ENCODE measurements at regions of chr18 and their contacts with region 1.

Region 1: DNA sequence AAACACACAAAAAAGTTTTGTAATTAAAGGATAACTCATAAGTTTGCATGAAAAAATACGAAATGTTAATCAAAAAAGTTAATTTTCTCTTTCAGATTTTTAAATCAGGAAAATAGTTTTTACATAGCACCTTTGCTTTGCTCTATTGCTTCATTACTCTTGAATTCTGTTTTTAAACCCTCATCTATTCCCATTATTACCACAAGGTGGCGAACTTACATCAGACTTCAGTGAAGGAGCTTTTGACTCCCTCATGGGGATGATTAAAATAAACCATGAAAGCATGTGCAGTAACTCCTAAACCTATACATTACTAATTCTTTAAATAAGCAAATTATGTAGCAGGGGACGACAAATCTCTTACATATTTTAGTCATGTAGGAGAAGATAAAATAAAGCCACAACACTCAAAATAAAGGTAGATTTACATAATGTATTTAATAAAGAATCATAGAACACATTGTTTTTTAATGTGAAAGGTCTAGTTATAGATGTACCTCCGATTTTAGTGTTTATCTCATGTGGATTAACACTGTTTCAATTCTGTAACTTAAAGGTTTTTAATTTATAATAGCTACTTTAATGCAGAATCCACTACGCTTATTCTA is 105.2 kb downstream of the NETO1 start:
- DNase-seq: peak; percentile 6 to 49
- ATAC-seq: peak; percentile 50 to 63; a peak in 4 of 6 replicates
- H3K4me3 ChIP-seq: no peak overlapping the region
- H3K27ac ChIP-seq: no peak overlapping the region
- H3K4me1 ChIP-seq: no peaks in the 10 kb centered on the region
- CTCF ChIP-seq: peak; percentile 67
- EP300 ChIP-seq: no peak
- POLR2A ChIP-seq: no peak
- RAD21 ChIP-seq: peak; percentile 75 to 77

Region 2: DNA sequence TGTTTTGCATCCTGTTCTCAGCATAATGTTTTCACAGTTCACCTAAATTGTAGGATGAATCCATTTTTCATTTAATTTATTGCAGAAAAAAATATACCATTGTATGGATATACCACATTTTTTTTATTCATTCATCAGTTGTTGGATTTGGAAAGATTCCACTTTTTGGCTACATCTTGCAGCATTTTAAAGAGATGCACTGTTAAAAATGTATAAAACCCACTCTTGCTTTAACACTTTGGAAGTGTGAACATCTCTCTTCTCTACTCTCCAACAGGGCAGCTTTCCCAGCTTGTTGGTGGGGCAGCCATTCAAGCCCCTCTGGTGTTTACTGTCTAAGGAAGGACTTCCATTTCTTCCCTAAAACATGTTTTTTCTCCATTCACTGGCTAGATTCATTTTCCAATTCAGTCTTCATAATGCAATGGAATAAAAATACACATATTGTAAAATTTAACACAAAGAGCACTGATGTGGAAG is 114.1 kb before region 1 on chr18:
- CTCF ChIA-PET with region 1: no interaction called
- POLR2A ChIA-PET with region 1: no interaction called
- DNase-seq: no peak
- ATAC-seq: no peak
- H3K4me3 ChIP-seq: no peak overlapping the region
- H3K27ac ChIP-seq: no peak overlapping the region
- H3K4me1 ChIP-seq: no peaks in the 10 kb centered on the region
- CTCF ChIP-seq: no peak
- EP300 ChIP-seq: no peak
- POLR2A ChIP-seq: no peak
- RAD21 ChIP-seq: no peak

Region 3: GRCh38 chr18:72720116-72720515 is 42.5 kb before region 1 on chr18:
- CTCF ChIA-PET with region 1: no interaction called
- POLR2A ChIA-PET with region 1: no interaction called
- DNase-seq: no peak
- ATAC-seq: no peak
- H3K4me3 ChIP-seq: no peak overlapping the region
- H3K27ac ChIP-seq: no peak overlapping the region
- H3K4me1 ChIP-seq: no peaks in the 10 kb centered on the region
- CTCF ChIP-seq: no peak
- EP300 ChIP-seq: no peak
- POLR2A ChIP-seq: no peak
- RAD21 ChIP-seq: no peak

Region 4: DNA sequence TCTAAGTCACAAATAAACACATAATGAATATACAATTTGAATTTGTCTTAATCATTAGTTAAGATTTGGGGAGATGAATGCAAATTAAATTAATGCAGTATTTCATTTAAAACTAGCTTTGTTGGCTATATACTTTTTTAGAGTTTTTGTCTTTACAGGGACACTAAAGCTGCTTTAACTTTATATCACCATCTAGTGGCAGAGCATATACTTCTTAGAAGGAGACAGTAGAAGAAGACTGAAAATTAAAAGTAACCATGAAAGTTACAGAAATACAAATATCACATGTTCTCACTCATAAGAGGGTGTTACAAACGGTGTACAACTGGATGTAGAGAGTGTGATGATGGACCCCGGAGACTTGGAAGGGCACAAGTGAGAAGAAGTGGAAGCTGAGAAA is 373.5 kb after region 1 on chr18:
- CTCF ChIA-PET with region 1: interaction called, 11 read pairs
- POLR2A ChIA-PET with region 1: no interaction called
- DNase-seq: peak in 1 of 2 experiments; percentile 2
- ATAC-seq: peak in 1 of 2 experiments; percentile 54; a peak in 2 of 6 replicates
- H3K4me3 ChIP-seq: no peak overlapping the region
- H3K27ac ChIP-seq: no peak overlapping the region
- H3K4me1 ChIP-seq: no peaks in the 10 kb centered on the region
- CTCF ChIP-seq: peak; percentile 33; the same call in 2 of the 3 replicates
- EP300 ChIP-seq: no peak
- POLR2A ChIP-seq: no peak
- RAD21 ChIP-seq: peak; percentile 41 to 46; a peak in 4 of 5 replicates

Region 5: GRCh38 chr18:73980289-73980979 is 1217.8 kb after region 1 on chr18:
- CTCF ChIA-PET with region 1: interaction called, 12 read pairs
- POLR2A ChIA-PET with region 1: no interaction called
- DNase-seq: peak; percentile 20 to 27
- ATAC-seq: peak; percentile 71 to 84; a peak in 5 of 6 replicates
- H3K4me3 ChIP-seq: no peak overlapping the region
- H3K27ac ChIP-seq: no peak overlapping the region
- H3K4me1 ChIP-seq: no peaks in the 10 kb centered on the region
- CTCF ChIP-seq: peak; percentile 45
- EP300 ChIP-seq: no peak
- POLR2A ChIP-seq: no peak
- RAD21 ChIP-seq: peak; percentile 38 to 46; a peak in 4 of 5 replicates

Measured in A549 (cell line).